Gastrocnemius medialis (tissue), 4 donors: ENCODE measurements at regions of chr5 and their contacts with region 1.

Region 1: DNA sequence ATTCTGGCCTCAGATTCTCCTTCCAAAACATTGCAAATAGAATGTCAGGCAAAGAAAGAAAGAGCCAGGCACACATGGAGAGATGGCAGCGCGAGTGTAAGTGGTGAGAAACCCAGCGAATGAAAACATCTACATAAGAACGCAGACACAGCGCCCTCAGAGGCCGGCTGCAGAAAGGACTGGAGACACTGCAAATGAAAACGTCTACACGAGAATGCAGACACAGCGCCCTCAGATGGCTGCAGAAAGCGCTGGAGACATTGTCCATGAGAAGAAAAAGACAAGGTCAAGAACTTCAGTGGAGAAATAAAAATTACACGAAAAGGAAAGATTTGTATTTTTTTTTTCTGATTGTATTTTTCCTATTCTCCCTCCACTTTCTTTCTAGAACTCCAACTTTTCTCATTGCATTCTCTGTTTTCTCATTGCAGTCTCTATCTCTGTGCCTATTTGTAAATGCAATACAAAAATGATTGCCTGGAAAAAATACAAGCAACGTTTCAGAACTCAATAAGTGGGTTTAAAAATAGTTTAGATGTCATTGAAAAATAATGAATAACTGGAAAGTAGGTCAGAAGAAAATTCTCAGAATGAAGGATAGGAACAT is 117.9 kb upstream of the LPCAT1 start:
- DNase-seq: peak; percentile 25 to 58
- ATAC-seq: peak in 1 of 2 donors; percentile 76
- H3K4me3 ChIP-seq: no peak overlapping the region
- H3K27ac ChIP-seq: no peak overlapping the region
- H3K4me1 ChIP-seq: no peaks in the 10 kb centered on the region
- H3K27me3 ChIP-seq: peaks cover 20 to 23% (median 22%) of the 10 kb centered on the region in 3 donors
- CTCF ChIP-seq: peak in 4 of 5 experiments; percentile 30 to 55 (median 41)
- POLR2A ChIP-seq: no peak

Region 2: GRCh38 chr5:1167728-1168709 is 473.6 kb before region 1 on chr5:
- in situ Hi-C with region 1: loop called (anchors 25 kb)
- intact Hi-C with region 1: loop called (anchors 2 kb)
- DNase-seq: peak; percentile 27 to 29
- ATAC-seq: peak; percentile 50 to 58
- H3K4me3 ChIP-seq: peak overlapping the region in 1 of 4 donors; percentile 9
- H3K27ac ChIP-seq: no peak overlapping the region
- H3K4me1 ChIP-seq: no peaks in the 10 kb centered on the region
- H3K27me3 ChIP-seq: peaks cover 0 to 11% (median 4%) of the 10 kb centered on the region in 3 donors
- CTCF ChIP-seq: peak in 4 of 5 experiments; percentile 43 to 61 (median 50)
- POLR2A ChIP-seq: no peak

Region 3: GRCh38 chr5:1385395-1386273 is 256.0 kb before region 1 on chr5:
- in situ Hi-C with region 1: loop called in 1 of 4 experiments (anchors 25 kb)
- intact Hi-C with region 1: loop called (anchors 10 kb)
- DNase-seq: peak; percentile 52 to 58
- ATAC-seq: peak; percentile 58 to 79
- H3K4me3 ChIP-seq: peak overlapping the region; percentile 58 to 76 (median 68)
- H3K27ac ChIP-seq: no peak overlapping the region
- H3K4me1 ChIP-seq: peaks cover 6 to 13% of the 10 kb centered on the region in 2 donors
- H3K27me3 ChIP-seq: peaks cover 20 to 50% (median 24%) of the 10 kb centered on the region in 3 donors
- CTCF ChIP-seq: no peak
- POLR2A ChIP-seq: peak; percentile 43 to 48

Region 4: GRCh38 chr5:1724822-1725643 is 83.4 kb after region 1 on chr5:
- in situ Hi-C with region 1: no loop called
- intact Hi-C with region 1: no loop called
- DNase-seq: no peak
- ATAC-seq: no peak
- H3K4me3 ChIP-seq: no peak overlapping the region
- H3K27ac ChIP-seq: no peak overlapping the region
- H3K4me1 ChIP-seq: no peaks in the 10 kb centered on the region
- H3K27me3 ChIP-seq: no peaks in the 10 kb centered on the region
- CTCF ChIP-seq: no peak
- POLR2A ChIP-seq: no peak